ENCODE measurements at regions of chrX and their contacts with region 1.

Region 1: DNA sequence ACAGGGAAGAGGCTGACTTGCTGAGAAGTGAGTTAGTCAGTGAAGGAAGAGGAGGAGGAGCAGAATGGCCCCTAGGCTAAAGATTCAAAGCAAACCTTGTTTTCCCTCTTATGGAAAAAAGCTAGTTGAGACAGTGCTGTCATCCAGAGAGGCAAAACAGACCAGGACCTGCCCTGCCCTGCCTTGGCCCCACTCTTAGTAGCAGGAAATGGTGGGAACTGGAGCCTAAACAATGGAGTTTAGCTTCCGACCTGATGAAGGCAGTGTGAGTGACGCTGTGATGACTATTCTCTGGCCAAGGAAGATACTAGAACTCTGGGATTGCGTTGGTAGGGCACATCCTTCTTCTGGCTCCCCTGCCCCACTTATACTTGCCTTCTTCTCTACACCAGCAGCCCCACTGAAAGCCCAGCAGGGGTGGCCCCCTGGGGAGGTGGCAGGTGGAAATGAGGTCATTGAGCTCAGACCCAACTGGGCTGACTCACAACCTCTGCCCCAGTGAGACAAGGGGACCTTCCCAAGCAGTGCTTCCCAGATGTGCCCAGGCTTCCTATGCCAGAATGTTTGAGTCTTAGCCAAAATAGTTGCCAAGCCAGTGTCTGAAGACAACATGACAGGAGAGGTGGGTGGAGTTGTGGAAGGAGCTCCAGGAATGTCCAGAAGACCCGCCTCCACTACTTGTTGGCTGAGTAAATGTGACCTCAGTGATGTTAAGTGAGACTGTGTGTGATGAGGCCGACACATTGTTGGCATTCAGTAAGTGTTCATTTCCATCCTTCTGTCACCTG is 38.8 kb downstream of the MSN start:
- DNase-seq: peak; percentile 59 to 84
- ATAC-seq: peak; percentile 57
- H3K4me3 ChIP-seq: no peak overlapping the region
- H3K27ac ChIP-seq: peak overlapping the region in 1 of 2 donors; percentile 89
- H3K4me1 ChIP-seq: peaks cover 2 to 4% of the 10 kb centered on the region in 2 donors
- H3K27me3 ChIP-seq: no peaks in the 10 kb centered on the region

Region 2: DNA sequence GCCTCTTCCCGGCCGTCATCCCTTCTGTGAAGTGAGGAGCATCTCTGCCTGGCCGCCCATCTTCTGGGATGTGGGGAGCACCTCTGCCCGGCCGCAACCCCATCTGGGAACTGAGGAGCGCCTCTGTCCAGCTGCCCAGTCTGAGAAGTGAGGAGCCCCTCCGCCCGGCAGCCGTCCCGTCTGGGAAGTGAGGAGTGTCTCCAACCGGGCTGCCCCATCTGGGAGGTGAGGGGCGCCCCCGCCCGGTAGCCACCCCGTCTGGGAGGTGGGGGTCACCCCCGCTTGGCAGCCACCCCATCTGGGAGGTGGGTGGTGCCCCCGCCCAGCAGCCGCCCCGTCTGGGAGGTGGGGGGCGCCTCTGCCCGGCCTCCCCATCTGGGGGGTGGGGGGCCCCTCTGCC is 314.0 kb before region 1 on chrX:
- intact Hi-C with region 1: no loop called
- DNase-seq: no peak
- ATAC-seq: no peak
- H3K4me3 ChIP-seq: no peak overlapping the region
- H3K27ac ChIP-seq: no peak overlapping the region
- H3K4me1 ChIP-seq: no peaks in the 10 kb centered on the region
- H3K27me3 ChIP-seq: no peaks in the 10 kb centered on the region

Region 3: DNA sequence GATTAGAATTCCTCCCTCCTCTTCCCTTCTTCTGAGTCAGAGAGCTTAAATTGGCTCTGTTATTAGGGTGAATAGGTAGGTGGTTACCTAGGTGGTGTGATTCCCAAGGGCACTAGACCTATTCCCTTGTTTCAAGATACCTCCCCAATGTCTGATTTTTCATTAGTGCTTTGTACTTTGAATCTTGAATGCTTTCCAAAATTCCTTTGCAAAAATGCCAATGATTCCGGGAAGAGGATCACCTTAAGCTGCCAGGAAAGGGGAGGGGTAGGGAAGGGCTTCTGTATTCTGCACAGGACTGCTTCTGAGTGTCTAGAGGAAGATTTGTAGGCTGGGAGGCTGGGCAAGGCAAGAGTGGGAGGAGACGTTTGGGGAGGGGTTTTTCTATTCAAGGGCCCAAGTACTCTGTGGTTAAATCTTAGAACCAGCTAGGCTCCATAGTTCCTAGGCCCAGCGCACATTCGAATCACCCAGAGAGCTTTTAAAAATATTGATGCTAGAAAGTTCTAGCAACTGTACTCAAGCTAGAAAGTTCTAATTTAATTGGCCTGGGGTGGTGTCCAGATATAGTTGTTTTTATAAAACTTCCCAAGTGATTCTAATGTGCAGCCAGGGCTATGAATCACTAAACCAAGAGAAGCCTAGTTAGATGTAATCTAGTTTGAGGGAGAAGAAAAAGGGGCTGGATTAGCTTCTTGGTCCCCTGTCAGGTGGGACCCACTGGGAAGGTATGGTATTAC is 63.0 kb before region 1 on chrX:
- intact Hi-C with region 1: loop called in 1 of 2 experiments (anchors 2 kb)
- DNase-seq: no peak
- ATAC-seq: peak; percentile 61
- H3K4me3 ChIP-seq: no peak overlapping the region
- H3K27ac ChIP-seq: peak overlapping the region; percentile 36 to 85
- H3K4me1 ChIP-seq: peaks cover 3 to 5% of the 10 kb centered on the region in 2 donors
- H3K27me3 ChIP-seq: no peaks in the 10 kb centered on the region

Region 4: GRCh38 chrX:65667503-65668376 is 38.5 kb before region 1 on chrX and contains the start of gene MSN:
- intact Hi-C with region 1: loop called (anchors 5 kb)
- DNase-seq: peak; percentile 86 to 94
- ATAC-seq: peak; percentile 92
- H3K4me3 ChIP-seq: peak within 1 kb of the TSS; percentile 66 to 70
- H3K27ac ChIP-seq: peak within 1 kb of the TSS; percentile 17 to 87
- H3K4me1 ChIP-seq: no peaks in the 10 kb centered on the region
- H3K27me3 ChIP-seq: no peaks in the 10 kb centered on the region
- total RNA-seq, gene MSN: 374 to 532 TPM

Measured in aorta (tissue), 5 donors.